ENCODE measurements at regions of chr1 and their contacts with region 1.

Region 1: DNA sequence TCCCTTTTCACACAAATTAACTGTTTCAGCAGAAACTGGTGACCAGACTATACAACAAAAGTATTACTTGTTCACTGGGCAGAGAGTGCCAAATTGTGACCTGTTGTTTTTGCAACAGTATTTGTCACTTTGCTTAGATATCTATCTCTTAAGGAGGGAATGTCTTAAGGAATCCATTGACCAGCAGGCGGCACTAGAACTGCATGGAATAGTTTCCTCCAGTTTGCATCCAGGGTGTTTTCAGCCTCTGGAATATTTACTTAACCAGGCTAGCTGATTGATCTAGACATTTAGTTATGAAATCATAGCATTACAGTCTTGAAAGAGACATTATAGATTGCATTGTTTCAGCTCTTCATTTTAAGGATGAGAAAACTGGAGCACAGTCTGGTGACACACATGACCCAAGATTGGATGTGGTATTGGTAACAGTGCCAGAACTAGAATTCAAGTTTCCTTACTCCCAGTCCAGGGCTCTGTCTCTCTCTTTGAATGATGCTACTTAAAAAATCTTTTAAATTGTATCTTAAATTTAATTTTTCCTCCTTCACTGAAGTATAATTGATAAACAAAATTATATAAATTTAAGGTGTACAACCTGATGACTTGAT is 16.9 kb downstream of the RPTN start:
- DNase-seq: peak; percentile 90
- ATAC-seq: peak; percentile 95
- H3K4me3 ChIP-seq: no peak overlapping the region
- H3K27ac ChIP-seq: no peak overlapping the region
- H3K4me1 ChIP-seq: no peaks in the 10 kb centered on the region
- H3K27me3 ChIP-seq: peaks cover 25% of the 10 kb centered on the region; the same call in 1 of the 2 replicates
- CTCF ChIP-seq: peak; percentile 99

Region 2: GRCh38 chr1:152227310-152227928 is 85.3 kb after region 1 on chr1:
- CTCF ChIA-PET with region 1: no interaction called
- POLR2A ChIA-PET with region 1: no interaction called
- intact Hi-C with region 1: loop called (anchors 1 kb)
- DNase-seq: peak; percentile 23
- ATAC-seq: peak; percentile 53
- H3K4me3 ChIP-seq: no peak overlapping the region
- H3K27ac ChIP-seq: no peak overlapping the region
- H3K4me1 ChIP-seq: no peaks in the 10 kb centered on the region
- H3K27me3 ChIP-seq: no peaks in the 10 kb centered on the region; the same call in 1 of the 2 replicates
- CTCF ChIP-seq: peak; percentile 57

Region 3: DNA sequence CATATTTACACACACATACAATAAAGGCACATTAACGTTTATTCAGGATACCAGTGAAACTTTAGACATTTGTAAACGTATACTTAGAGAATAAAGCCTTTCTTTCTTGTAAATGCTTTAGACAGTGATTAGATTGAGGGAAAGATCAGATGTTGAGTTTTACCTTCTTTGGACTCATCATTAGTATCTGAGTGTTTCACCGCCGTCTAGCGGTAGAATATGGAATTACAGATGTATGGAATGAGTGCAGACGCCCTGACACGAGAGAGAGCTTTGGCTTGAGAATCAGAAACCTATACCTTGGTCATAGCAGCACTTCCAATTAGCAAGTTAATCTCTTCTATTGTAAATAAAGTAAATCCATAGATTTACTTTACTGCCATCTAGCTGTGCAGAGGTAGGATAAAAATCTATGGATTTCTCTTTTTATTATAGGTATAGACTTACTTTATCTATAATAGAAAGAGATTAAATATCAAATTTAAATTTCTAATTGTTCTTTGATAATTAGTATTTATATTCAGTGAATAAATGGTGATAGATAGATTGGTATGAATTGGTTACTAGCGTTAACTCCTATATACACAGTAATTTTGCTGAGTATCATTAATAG is 205.1 kb after region 1 on chr1:
- CTCF ChIA-PET with region 1: no interaction called
- POLR2A ChIA-PET with region 1: no interaction called
- intact Hi-C with region 1: loop called (anchors 5 kb)
- DNase-seq: peak; percentile 91
- ATAC-seq: peak; percentile 76
- H3K4me3 ChIP-seq: no peak overlapping the region
- H3K27ac ChIP-seq: no peak overlapping the region
- H3K4me1 ChIP-seq: no peaks in the 10 kb centered on the region
- H3K27me3 ChIP-seq: peaks cover 5% of the 10 kb centered on the region; the same call in 1 of the 2 replicates
- CTCF ChIP-seq: peak; percentile 95

Region 4: GRCh38 chr1:152459596-152460528 is 317.8 kb after region 1 on chr1:
- CTCF ChIA-PET with region 1: interaction called, 6 read pairs
- POLR2A ChIA-PET with region 1: no interaction called
- intact Hi-C with region 1: loop called (anchors 2 kb)
- DNase-seq: peak; percentile 76
- ATAC-seq: peak; percentile 66
- H3K4me3 ChIP-seq: no peak overlapping the region
- H3K27ac ChIP-seq: no peak overlapping the region
- H3K4me1 ChIP-seq: no peaks in the 10 kb centered on the region
- H3K27me3 ChIP-seq: no peaks in the 10 kb centered on the region
- CTCF ChIP-seq: peak; percentile 94